MCF 10A (cell line): ENCODE measurements at regions of chr11 and their contacts with region 1.

Region 1: DNA sequence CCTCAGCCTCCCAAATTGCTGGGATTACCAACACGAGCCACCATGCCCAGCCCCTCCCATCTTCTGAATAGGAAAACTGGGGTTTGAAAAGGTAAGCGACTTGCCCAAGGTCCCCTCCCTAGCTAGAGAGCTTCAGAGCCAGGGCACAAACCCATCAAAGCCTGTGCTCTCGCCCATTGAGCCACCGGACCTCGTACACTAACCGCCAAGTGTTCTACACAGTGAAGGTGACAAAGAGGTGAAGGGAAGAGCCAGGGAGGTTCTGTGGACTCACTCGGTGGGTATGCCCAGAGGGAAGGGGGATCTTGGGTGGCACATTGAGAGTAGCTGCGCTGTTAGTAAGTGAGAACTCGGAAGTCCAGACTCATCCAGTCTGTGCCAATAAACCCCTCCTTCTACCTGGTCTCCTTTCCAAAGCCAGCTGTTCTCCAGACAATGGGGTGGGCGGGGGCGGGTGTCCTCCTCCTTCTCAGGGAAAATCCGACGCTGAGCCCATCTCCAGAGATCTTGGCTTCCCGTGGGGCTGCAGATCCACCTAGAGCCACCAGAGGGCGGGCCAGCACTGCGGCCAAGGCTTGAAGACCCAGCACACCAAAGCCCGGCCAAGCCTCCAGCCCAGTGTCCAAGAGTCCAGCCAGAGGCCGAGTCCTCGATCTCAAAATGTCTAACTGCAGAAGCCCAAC is 3.2 kb upstream of the RTN4RL2 start:
- DNase-seq: peak; percentile 82
- H3K4me3 Mint-ChIP-seq: peak overlapping the region; percentile 39
- H3K27ac Mint-ChIP-seq: no peak overlapping the region
- H3K4me1 Mint-ChIP-seq: peaks cover 27% of the 10 kb centered on the region
- H3K27me3 Mint-ChIP-seq: peaks cover 34% of the 10 kb centered on the region
- CTCF ChIP-seq: peak; percentile 98

Region 2: GRCh38 chr11:57426929-57427726 is 30.0 kb before region 1 on chr11 and contains the start of gene SLC43A3:
- CTCF ChIA-PET with region 1: interaction called, 14 read pairs
- POLR2A ChIA-PET with region 1: interaction called, 3 read pairs
- intact Hi-C with region 1: no loop called
- DNase-seq: peak; percentile 89
- H3K4me3 Mint-ChIP-seq: peak within 1 kb of the TSS; percentile 84
- H3K27ac Mint-ChIP-seq: peak within 1 kb of the TSS; percentile 98
- H3K4me1 Mint-ChIP-seq: peaks cover 43% of the 10 kb centered on the region
- H3K27me3 Mint-ChIP-seq: no peaks in the 10 kb centered on the region
- CTCF ChIP-seq: no peak
- total RNA-seq, gene SLC43A3: 96.6 and 112 TPM in 2 replicates

Region 3: GRCh38 chr11:57467508-57468157 is 10.5 kb after region 1 on chr11:
- CTCF ChIA-PET with region 1: interaction called, 50 read pairs
- POLR2A ChIA-PET with region 1: no interaction called
- intact Hi-C with region 1: no loop called
- DNase-seq: no peak
- H3K4me3 Mint-ChIP-seq: no peak overlapping the region
- H3K27ac Mint-ChIP-seq: no peak overlapping the region
- H3K4me1 Mint-ChIP-seq: no peaks in the 10 kb centered on the region
- H3K27me3 Mint-ChIP-seq: no peaks in the 10 kb centered on the region
- CTCF ChIP-seq: no peak

Region 4: GRCh38 chr11:57493507-57494503 is 36.7 kb after region 1 on chr11:
- CTCF ChIA-PET with region 1: interaction called, 46 read pairs
- POLR2A ChIA-PET with region 1: interaction called, 3 read pairs
- intact Hi-C with region 1: no loop called
- DNase-seq: peak; percentile 82
- H3K4me3 Mint-ChIP-seq: no peak overlapping the region
- H3K27ac Mint-ChIP-seq: no peak overlapping the region
- H3K4me1 Mint-ChIP-seq: peaks cover 13% of the 10 kb centered on the region
- H3K27me3 Mint-ChIP-seq: peaks cover under 1% of the 10 kb centered on the region
- CTCF ChIP-seq: peak; percentile 88

Region 5: DNA sequence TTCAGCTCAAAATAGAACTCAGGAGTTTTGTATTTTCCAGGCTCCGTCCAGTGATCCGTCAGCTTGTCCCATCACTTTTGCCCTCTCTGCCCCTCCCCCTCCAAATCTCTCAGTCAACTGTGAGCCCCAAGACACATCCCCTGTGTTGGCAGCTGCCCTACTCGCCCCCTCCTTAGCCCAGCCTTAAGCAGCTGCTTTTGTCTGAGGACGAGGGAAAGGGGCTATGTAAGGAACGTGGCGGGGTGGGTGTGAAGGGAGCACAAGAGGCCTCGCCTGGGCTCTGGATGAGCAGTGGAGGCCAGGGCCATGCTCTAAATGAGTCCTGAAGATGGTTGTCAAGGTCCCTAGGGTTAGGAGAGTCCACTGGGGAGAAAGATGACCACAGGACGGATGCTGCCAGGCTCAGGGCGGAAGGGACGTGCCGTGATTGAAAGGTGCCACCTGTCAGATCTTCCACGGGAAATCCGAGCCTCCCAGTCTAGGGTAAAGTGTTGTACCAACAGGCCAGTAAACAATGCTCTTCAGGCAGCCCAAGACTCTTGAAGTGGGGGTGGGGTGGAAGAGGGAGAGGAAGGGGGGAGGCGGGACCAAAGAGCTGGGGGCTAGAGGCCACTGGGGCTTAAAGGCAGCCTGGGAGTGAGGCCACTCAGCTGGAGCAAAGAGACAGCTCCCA is 80.0 kb after region 1 on chr11 and contains the start of gene SMTNL1:
- CTCF ChIA-PET with region 1: interaction called, 10 read pairs
- POLR2A ChIA-PET with region 1: no interaction called
- intact Hi-C with region 1: no loop called
- DNase-seq: no peak
- H3K4me3 Mint-ChIP-seq: no peak within 1 kb of the TSS
- H3K27ac Mint-ChIP-seq: no peak within 1 kb of the TSS
- H3K4me1 Mint-ChIP-seq: no peaks in the 10 kb centered on the region
- H3K27me3 Mint-ChIP-seq: peaks cover 24% of the 10 kb centered on the region
- CTCF ChIP-seq: no peak
- total RNA-seq, gene SMTNL1: not detected in 2 replicates

Region 6: GRCh38 chr11:57574061-57574460 is 117.0 kb after region 1 on chr11:
- CTCF ChIA-PET with region 1: no interaction called
- POLR2A ChIA-PET with region 1: no interaction called
- intact Hi-C with region 1: no loop called
- DNase-seq: no peak
- H3K4me3 Mint-ChIP-seq: no peak overlapping the region
- H3K27ac Mint-ChIP-seq: no peak overlapping the region
- H3K4me1 Mint-ChIP-seq: peaks cover 5% of the 10 kb centered on the region
- H3K27me3 Mint-ChIP-seq: no peaks in the 10 kb centered on the region
- CTCF ChIP-seq: no peak

Region 7: DNA sequence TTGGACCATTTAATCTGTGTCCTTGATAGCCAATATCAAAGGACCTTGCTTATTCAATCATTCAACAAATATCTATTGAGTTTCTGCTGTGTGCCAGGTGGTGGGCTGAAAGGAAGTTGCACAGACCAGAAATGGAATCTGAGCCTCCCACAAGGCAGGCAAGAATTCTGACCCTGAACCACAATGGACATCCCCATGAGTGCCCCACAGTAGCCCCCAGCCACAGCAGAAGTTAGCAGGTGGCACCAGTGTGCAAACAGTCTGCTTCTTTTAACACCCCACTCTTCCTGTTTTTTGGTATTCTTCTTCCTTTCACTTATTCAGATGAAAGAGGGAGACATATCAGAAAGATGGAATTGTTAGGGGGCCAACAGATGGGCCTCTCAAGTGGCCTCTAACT is 128.2 kb after region 1 on chr11:
- CTCF ChIA-PET with region 1: no interaction called
- POLR2A ChIA-PET with region 1: no interaction called
- intact Hi-C with region 1: no loop called
- DNase-seq: no peak
- H3K4me3 Mint-ChIP-seq: no peak overlapping the region
- H3K27ac Mint-ChIP-seq: no peak overlapping the region
- H3K4me1 Mint-ChIP-seq: no peaks in the 10 kb centered on the region
- H3K27me3 Mint-ChIP-seq: no peaks in the 10 kb centered on the region
- CTCF ChIP-seq: no peak

Region 8: GRCh38 chr11:57800444-57801182 is 343.5 kb after region 1 on chr11:
- CTCF ChIA-PET with region 1: interaction called, 6 read pairs
- POLR2A ChIA-PET with region 1: no interaction called
- intact Hi-C with region 1: loop called (anchors 10 kb)
- DNase-seq: peak; percentile 76
- H3K4me3 Mint-ChIP-seq: no peak overlapping the region
- H3K27ac Mint-ChIP-seq: no peak overlapping the region
- H3K4me1 Mint-ChIP-seq: peaks cover 20% of the 10 kb centered on the region
- H3K27me3 Mint-ChIP-seq: no peaks in the 10 kb centered on the region
- CTCF ChIP-seq: peak; percentile 71